Activated B cell treated with CpG ODN at 0.5 μM for 24 hours (primary cell): ENCODE measurements at regions of chr9 and their contacts with region 1.

Region 1: DNA sequence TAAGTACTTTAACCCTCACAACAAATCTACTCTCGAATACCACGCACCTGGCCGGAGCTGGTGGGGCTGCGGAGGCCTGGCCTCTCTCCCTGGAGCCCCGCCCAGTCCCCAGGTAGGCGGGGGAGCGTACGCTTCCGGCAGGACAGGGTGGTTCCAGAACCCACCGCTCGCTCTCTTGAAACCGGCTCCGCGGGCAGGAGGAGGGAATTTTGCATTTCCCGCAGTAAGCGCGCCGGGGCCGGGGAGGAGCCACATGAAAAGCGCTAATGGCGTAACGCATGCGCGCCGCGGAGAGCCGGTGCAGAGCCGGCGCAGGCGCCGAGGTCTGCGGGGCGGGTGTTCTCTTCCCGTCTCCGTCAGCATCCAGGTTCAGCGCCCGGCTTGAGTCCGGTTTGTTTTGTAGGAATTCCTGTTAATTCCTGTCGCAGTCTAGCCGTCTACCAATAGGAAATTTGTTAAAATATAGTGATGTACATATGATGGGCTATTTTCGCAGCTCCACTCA is 20.8 kb downstream of the CAVIN4 start:
- DNase-seq: peak; percentile 73
- ATAC-seq: peak; percentile 91
- H3K4me3 Mint-ChIP-seq: peak overlapping the region; percentile 81
- H3K27ac Mint-ChIP-seq: no peak overlapping the region
- H3K4me1 Mint-ChIP-seq: peaks cover 18% of the 10 kb centered on the region
- H3K27me3 Mint-ChIP-seq: no peaks in the 10 kb centered on the region
- CTCF ChIP-seq: no peak

Region 2: DNA sequence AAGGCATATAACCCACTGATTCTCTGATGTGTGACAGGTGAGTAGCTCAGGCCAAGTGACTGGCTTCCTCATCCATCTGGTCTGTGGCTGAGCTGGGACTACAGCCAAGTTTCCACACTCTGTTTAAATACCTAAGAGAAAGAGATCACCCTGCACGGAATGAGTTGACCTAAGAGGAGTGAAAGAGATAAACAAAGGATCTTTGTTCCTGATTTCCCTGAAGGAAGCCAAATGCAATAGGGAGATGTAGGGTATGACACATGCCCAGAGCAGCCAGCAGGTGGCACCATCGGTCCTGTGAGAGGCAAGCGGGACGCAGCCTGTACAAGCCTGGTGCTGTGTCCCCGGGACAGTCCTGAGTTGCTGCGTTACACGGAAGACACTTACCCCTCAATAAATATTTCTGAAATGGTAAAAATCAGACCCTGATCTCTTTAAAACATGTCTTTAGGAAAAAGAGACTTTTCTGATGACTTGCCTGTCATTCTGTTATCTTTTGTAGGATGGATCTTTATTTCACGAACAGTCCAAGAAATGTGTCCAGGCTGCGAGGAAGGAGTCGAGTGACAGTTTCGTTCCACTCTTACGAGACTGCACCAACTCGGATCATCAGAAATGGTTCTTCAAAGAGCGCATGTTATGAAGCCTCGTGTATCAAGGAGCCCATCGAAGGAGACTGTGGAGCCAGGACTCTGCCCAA is 1750.1 kb before region 1 on chr9:
- CTCF ChIA-PET with region 1: interaction called, 3 read pairs
- POLR2A ChIA-PET with region 1: no interaction called
- intact Hi-C with region 1: loop called (anchors 1 kb)
- DNase-seq: peak; percentile 59
- ATAC-seq: peak; percentile 97
- H3K4me3 Mint-ChIP-seq: no peak overlapping the region
- H3K27ac Mint-ChIP-seq: no peak overlapping the region
- H3K4me1 Mint-ChIP-seq: no peaks in the 10 kb centered on the region
- H3K27me3 Mint-ChIP-seq: no peaks in the 10 kb centered on the region
- CTCF ChIP-seq: peak; percentile 59

Region 3: DNA sequence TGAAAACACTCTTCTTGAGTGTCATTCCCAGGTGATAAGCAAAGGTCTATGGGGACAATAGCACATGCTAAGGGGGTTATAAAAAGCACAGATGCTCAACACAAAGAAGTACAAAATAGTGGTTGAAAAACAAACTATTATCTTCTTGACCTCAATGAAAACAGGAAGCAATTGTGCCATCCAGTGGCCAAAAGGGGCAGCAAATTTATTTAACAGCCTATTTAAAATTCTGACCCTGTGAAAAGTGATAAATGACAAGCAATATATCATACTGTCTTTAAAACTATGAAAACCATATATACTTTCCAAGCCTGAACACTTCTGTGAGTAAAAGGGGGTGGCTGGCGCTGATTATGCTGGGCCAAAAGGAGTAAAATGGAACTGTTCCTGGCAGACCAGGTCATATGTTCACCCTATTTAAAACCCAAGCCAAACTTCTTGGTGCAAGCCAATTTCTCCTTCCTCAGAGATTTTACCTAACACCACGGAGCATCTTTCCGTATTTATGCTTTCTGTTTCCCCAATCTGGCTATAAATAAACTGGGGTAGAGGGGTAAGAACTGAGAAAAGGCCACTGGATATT is 275.6 kb before region 1 on chr9:
- CTCF ChIA-PET with region 1: interaction called, 6 read pairs
- POLR2A ChIA-PET with region 1: no interaction called
- intact Hi-C with region 1: loop called (anchors 1 kb)
- DNase-seq: no peak
- ATAC-seq: no peak
- H3K4me3 Mint-ChIP-seq: no peak overlapping the region
- H3K27ac Mint-ChIP-seq: no peak overlapping the region
- H3K4me1 Mint-ChIP-seq: peaks cover 2% of the 10 kb centered on the region
- H3K27me3 Mint-ChIP-seq: no peaks in the 10 kb centered on the region
- CTCF ChIP-seq: no peak

Region 4: DNA sequence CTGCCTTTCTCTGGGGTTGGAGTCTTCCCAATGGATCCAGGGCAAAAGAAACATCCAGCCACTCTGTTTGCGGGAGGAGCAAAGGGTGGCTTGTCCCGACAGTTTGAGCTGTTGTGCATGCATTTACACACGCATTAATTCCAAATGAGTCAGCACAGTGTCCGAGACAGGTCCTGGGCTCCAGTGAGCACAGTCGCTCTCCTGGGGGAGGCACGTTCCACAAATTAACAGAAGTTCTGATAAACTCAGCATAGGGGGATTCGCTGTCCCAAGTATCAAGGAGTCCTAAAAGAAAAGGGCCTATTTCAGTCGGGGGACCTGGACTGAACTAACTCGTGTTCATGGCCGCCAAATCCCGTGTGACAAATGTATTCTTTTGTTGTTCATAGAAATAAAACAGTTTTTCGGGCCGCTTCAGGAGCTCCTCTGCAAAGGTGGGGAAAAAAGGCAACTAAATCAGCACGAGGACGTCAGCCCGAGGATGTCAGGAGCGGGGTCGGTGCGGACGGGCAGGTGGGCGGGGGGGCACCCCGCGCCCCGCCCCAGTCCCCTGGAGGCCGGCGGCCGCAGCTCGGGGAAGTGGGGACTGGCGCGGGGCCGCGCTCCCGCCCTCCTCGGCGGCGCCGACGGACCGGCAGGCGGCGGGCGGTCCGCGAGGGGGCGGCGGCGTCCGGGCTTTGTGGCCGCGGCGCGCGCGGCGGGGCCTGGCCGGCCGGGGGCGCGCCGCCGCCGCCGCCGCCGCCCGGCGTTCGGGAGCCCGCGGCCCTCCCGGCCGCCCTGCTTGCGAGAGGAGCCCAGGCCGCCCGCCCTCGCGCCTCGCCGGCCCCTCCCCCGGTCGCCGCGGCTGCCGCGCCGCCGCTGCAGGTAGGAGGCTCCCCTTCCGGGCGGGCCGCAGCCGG is 171.9 kb before region 1 on chr9 and contains the start of gene MSANTD3:
- CTCF ChIA-PET with region 1: no interaction called
- POLR2A ChIA-PET with region 1: no interaction called
- intact Hi-C with region 1: loop called (anchors 2 kb)
- DNase-seq: peak; percentile 59
- ATAC-seq: peak; percentile 85
- H3K4me3 Mint-ChIP-seq: peak within 1 kb of the TSS; percentile 95
- H3K27ac Mint-ChIP-seq: peak within 1 kb of the TSS; percentile 91
- H3K4me1 Mint-ChIP-seq: peaks cover 17% of the 10 kb centered on the region
- H3K27me3 Mint-ChIP-seq: peaks cover 4% of the 10 kb centered on the region
- CTCF ChIP-seq: no peak
- total RNA-seq, gene MSANTD3: 13.0 and 13.2 TPM in 2 replicates

Region 5: DNA sequence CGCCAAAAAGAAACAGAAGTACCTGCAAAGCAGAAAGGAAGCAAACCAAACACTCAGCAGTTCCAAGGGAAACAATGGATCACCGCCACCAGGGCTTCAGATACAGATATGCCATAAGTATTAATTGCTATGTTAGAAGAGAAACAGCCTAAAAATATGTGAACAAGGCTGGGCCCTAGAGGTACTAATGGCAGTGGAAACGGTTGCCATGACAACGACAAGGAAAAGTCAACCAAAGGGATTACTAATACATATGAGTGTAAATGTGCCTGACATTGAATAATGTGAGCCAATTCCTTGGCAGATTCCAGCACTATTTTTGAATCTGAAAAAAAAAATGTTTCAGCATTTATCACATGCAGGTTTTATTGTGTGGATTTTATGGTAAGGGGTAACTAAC is 54.2 kb after region 1 on chr9:
- CTCF ChIA-PET with region 1: no interaction called
- POLR2A ChIA-PET with region 1: no interaction called
- intact Hi-C with region 1: no loop called
- DNase-seq: no peak
- ATAC-seq: no peak
- H3K4me3 Mint-ChIP-seq: no peak overlapping the region
- H3K27ac Mint-ChIP-seq: no peak overlapping the region
- H3K4me1 Mint-ChIP-seq: no peaks in the 10 kb centered on the region
- H3K27me3 Mint-ChIP-seq: no peaks in the 10 kb centered on the region
- CTCF ChIP-seq: no peak

Region 6: DNA sequence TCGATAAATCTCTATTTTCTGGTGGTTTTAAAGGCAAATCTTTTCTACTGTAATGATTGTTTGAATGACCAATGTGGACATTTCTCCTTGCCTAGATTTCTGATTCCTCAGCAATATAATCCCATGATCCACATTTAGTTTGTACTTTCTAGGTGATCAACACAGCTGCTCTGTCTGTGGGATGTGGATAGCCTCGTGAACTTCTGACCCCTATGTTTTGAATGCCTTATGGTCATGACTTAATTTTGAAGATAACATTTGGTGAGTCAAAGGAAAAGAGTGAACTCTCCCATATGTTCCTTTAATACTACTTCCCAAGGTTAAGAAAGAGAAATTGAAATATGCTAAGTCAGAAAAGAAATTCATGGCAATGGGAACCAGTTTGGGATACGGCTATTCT is 126.7 kb after region 1 on chr9:
- CTCF ChIA-PET with region 1: no interaction called
- POLR2A ChIA-PET with region 1: no interaction called
- intact Hi-C with region 1: no loop called
- DNase-seq: no peak
- ATAC-seq: no peak
- H3K4me3 Mint-ChIP-seq: no peak overlapping the region
- H3K27ac Mint-ChIP-seq: no peak overlapping the region
- H3K4me1 Mint-ChIP-seq: no peaks in the 10 kb centered on the region
- H3K27me3 Mint-ChIP-seq: peaks cover 2% of the 10 kb centered on the region
- CTCF ChIP-seq: no peak

Region 7: GRCh38 chr9:101530077-101530711 is 931.5 kb after region 1 on chr9:
- CTCF ChIA-PET with region 1: no interaction called
- POLR2A ChIA-PET with region 1: no interaction called
- intact Hi-C with region 1: loop called (anchors 5 kb)
- DNase-seq: peak; percentile 44
- ATAC-seq: peak; percentile 53
- H3K4me3 Mint-ChIP-seq: no peak overlapping the region
- H3K27ac Mint-ChIP-seq: no peak overlapping the region
- H3K4me1 Mint-ChIP-seq: peaks cover 21% of the 10 kb centered on the region
- H3K27me3 Mint-ChIP-seq: peaks cover 11% of the 10 kb centered on the region
- CTCF ChIP-seq: peak; percentile 45